Activated T-helper 2 cell treated with anti-CD3 and anti-CD28 coated beads, Interferon-gamma antibody, Interleukin-2, Interleukin-4, amounts not matched to agents 10 μg/mL and 5 μg/mL and 100 μg/mL, durations not matched to agents 14 hours and 24 hours and 36 hours (primary cell): ENCODE measurements at regions of chr7 and their contacts with region 1.

Region 1: GRCh38 chr7:92953657-92954056 is 117.3 kb upstream of the CDK6 start:
- DNase-seq: no peak
- H3K4me3 Mint-ChIP-seq: no peak overlapping the region
- H3K27ac Mint-ChIP-seq: peak overlapping the region; percentile 83
- H3K4me1 Mint-ChIP-seq: peaks cover 35% of the 10 kb centered on the region
- H3K27me3 Mint-ChIP-seq: no peaks in the 10 kb centered on the region

Region 2: DNA sequence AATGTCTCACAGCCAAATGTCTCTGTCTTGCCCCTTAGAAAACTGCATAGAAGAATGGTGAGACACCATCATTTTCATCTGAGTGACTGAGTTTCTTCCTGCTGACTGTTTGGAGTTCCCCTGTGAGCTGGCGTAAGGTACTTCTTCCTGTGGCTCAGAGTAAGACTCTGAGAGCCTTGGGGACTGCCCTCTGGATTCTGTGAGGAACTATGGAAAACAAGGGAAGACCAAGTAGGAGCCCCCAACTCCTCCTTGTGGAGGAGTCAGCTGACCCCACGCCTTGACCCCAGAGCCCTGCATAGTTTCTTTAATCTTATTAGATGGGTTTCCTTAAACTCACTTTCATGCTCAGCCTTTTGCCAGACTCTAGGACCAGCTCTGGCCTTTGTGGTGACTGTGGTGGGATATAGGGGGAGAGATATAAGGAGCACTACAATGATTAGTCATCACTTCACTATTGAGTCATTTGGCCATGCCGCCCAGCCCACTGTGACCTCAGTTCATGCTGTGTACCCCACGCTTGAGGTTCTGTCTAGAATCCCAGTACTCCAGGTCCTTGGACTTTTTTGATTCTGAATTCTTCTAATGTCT is 311.6 kb before region 1 on chr7:
- intact Hi-C with region 1: loop called (anchors 5 kb)
- DNase-seq: peak; percentile 54
- H3K4me3 Mint-ChIP-seq: peak overlapping the region; percentile 47
- H3K27ac Mint-ChIP-seq: peak overlapping the region; percentile 97
- H3K4me1 Mint-ChIP-seq: peaks cover 88% of the 10 kb centered on the region
- H3K27me3 Mint-ChIP-seq: no peaks in the 10 kb centered on the region

Region 3: DNA sequence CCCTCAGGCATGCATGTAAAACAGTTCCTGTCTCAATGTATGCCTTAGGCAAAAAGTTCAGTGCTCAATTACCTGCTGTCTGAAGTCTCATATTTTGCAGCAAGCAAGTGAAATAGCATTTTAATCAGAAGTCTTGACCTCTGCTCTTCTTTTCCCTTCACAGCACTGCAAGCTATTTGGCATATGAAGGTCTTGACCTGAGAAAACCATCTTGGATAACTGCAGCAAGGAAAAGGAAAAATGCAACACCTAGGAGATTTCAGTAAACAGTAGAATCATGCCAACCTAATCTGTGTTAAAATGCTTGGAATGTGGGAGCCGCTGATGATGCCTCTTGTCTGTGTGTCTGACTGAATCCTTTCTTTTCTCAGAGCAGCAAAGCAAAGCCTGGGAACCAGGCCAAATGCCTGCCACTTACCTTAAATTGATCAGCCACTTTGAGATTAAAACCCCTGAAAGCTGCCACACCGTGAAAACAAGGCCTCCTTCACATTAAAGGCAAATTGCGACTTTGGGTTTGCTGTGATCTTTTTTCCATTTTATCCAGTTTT is 36.9 kb before region 1 on chr7:
- intact Hi-C with region 1: no loop called
- DNase-seq: no peak
- H3K4me3 Mint-ChIP-seq: no peak overlapping the region
- H3K27ac Mint-ChIP-seq: no peak overlapping the region
- H3K4me1 Mint-ChIP-seq: no peaks in the 10 kb centered on the region
- H3K27me3 Mint-ChIP-seq: no peaks in the 10 kb centered on the region

Region 4: GRCh38 chr7:93036807-93037206 is 83.2 kb after region 1 on chr7:
- intact Hi-C with region 1: loop called (anchors 1 kb)
- DNase-seq: peak; percentile 33
- H3K4me3 Mint-ChIP-seq: no peak overlapping the region
- H3K27ac Mint-ChIP-seq: peak overlapping the region; percentile 39
- H3K4me1 Mint-ChIP-seq: peaks cover 16% of the 10 kb centered on the region
- H3K27me3 Mint-ChIP-seq: no peaks in the 10 kb centered on the region

Region 5: GRCh38 chr7:93165447-93165846 is 211.8 kb after region 1 on chr7:
- intact Hi-C with region 1: loop called (anchors 10 kb)
- DNase-seq: no peak
- H3K4me3 Mint-ChIP-seq: no peak overlapping the region
- H3K27ac Mint-ChIP-seq: no peak overlapping the region
- H3K4me1 Mint-ChIP-seq: peaks cover 9% of the 10 kb centered on the region
- H3K27me3 Mint-ChIP-seq: no peaks in the 10 kb centered on the region